Head of caudate nucleus (tissue), 42 donors: ENCODE measurements at regions of chr9 and their contacts with region 1.

Region 1: DNA sequence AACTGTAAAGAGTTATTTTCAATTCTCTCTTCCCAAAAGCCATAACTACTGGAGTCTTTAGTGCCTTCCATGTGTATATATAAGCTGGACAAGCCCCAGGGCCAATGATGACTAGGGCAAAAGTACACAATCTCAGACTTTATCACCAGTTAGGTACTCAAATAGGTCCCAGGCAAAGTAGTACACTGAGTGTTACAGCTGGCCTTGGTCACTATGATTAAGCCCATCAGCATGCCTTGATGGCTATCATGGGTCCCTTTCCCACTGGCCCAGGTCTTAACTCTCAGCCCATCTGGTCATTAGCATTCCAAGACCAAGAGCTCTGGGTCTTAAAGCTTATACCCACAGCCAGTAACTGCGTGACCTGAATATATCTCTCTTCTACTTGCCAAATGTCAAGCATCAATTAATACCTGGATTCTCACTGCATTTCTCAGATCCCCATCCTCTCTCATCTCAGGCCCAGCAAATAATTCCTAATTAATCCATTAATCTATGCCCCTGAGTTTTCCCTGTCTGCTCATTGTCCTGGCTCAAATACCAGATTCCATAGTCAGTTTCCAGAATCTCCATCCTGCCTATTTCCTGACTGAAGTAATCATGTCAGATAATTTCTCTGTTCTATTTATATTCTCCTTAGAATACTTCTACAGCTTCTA is 62.3 kb downstream of the NR6A1 start:
- DNase-seq: no peak

Region 2: GRCh38 chr9:124617471-124618141 is 91.2 kb before region 1 on chr9:
- intact Hi-C with region 1: loop called (anchors 2 kb)
- DNase-seq: peak; percentile 32 to 95 (median 85)